Endothelial cell of umbilical vein (primary cell): ENCODE measurements at regions of chr17 and their contacts with region 1.

Region 1: DNA sequence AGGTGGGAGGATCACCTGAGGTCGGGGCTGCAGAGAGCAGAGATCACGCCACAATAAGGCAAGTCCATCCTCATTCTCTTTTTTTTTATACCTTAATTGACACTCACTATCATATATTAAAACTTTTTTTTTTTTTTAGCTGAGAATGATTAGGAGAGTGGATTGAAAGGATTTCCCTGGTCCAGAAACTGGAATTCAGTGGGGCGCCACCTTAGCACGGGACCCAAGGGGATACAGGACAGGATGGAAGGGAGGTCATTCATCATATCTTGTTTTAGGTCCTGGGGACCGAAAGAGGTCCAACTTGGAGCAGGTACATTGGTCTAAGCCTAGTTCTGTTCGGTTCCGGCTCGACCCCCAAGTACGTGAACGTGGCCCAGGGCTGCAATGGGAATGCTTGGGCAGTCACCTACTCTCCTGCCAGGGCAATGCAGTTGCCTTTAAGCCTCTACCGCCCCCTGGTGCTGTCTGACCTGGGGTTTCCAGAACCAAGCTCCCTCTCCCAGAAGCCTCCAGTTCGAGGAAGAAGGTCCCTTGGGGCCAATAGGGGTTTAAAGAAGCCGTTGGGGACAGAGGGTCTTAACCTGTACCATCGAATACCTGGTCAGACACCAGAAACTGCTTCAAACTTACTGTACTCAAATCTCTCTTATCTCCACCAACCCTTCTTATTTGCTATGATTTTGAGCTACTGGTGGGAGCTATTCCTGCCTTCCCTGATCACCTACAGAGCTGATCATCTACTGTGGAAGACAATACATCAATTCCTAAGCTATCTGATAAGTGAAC is 19.9 kb upstream of the GPATCH8 start:
- DNase-seq: peak; percentile 73
- H3K4me3 ChIP-seq: no peak overlapping the region
- H3K27ac ChIP-seq: no peak overlapping the region
- H3K4me1 ChIP-seq: no peaks in the 10 kb centered on the region
- H3K27me3 ChIP-seq: no peaks in the 10 kb centered on the region
- CTCF ChIP-seq: peak; percentile 55 to 81
- POLR2A ChIP-seq: no peak

Region 2: DNA sequence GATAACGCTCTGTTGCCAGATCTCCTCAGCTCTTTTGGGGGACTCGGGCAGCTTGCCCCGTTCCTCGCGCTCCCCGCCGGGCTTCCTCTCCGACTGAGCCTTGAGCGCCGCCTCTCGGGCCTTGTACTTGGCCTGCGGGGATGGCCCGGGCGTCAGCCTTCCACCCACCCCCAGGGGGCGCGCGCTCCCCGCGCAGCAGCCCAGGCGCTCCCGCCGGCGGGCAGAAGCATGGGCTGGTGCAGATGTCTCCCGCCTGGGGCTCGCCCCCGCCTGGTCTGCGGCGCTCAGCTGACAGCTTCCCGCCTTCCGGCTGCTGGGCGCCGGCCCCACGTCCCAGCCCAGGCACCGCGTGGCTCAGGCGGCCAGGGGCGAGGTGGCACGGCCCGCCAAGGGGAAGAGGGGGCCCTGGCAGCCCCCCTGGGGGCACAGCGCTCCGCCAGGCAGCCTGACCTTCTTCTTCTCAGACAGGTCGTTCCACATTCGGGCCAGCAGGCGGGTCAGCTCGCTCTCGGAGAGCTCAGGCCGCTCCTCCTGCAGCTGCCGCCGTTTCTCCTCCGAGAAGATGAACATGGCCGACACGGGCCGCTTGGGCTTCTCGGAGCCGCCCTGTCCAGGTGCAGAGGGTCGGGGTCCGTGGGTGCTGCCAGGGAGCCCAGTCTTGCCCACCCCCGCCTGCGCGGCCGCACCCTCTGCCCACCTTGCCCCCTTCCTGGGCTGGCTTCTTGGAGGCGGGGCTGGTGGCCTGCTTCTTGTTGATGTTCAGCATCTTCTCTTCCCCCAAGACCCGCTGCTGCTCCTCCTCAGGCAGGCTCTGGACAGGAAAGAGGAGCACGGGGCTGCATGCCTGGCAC is 312.5 kb before region 1 on chr17:
- CTCF ChIA-PET with region 1: interaction called, 11 read pairs
- POLR2A ChIA-PET with region 1: no interaction called
- dilution Hi-C with region 1: no loop called
- intact Hi-C with region 1: loop called (anchors 1 kb)
- DNase-seq: peak; percentile 89
- H3K4me3 ChIP-seq: no peak overlapping the region
- H3K27ac ChIP-seq: no peak overlapping the region
- H3K4me1 ChIP-seq: peaks cover 5% of the 10 kb centered on the region
- H3K27me3 ChIP-seq: no peaks in the 10 kb centered on the region
- CTCF ChIP-seq: peak; percentile 99
- POLR2A ChIP-seq: no peak

Region 3: DNA sequence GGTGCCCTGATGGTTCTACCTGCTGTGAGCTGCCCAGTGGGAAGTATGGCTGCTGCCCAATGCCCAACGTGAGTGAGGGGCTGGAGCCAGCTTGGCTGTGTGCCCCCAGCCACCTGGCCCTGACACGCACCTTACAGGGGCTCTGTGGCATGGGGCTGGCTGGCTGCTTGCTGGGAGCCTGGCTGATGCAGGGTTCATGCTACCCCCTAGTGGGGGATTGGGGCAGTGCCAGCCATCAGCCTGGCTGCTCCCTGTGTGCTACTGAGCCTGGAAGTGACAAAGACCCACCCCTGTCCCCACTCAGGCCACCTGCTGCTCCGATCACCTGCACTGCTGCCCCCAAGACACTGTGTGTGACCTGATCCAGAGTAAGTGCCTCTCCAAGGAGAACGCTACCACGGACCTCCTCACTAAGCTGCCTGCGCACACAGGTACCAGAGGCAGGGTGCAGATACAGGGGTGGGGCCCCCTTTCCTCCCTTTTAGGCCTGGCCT is 172.3 kb before region 1 on chr17:
- CTCF ChIA-PET with region 1: interaction called, 15 read pairs
- POLR2A ChIA-PET with region 1: no interaction called
- dilution Hi-C with region 1: no loop called
- intact Hi-C with region 1: no loop called
- DNase-seq: peak; percentile 64
- H3K4me3 ChIP-seq: no peak overlapping the region
- H3K27ac ChIP-seq: no peak overlapping the region
- H3K4me1 ChIP-seq: no peaks in the 10 kb centered on the region
- H3K27me3 ChIP-seq: no peaks in the 10 kb centered on the region
- CTCF ChIP-seq: peak; percentile 64 to 95
- POLR2A ChIP-seq: no peak

Region 4: DNA sequence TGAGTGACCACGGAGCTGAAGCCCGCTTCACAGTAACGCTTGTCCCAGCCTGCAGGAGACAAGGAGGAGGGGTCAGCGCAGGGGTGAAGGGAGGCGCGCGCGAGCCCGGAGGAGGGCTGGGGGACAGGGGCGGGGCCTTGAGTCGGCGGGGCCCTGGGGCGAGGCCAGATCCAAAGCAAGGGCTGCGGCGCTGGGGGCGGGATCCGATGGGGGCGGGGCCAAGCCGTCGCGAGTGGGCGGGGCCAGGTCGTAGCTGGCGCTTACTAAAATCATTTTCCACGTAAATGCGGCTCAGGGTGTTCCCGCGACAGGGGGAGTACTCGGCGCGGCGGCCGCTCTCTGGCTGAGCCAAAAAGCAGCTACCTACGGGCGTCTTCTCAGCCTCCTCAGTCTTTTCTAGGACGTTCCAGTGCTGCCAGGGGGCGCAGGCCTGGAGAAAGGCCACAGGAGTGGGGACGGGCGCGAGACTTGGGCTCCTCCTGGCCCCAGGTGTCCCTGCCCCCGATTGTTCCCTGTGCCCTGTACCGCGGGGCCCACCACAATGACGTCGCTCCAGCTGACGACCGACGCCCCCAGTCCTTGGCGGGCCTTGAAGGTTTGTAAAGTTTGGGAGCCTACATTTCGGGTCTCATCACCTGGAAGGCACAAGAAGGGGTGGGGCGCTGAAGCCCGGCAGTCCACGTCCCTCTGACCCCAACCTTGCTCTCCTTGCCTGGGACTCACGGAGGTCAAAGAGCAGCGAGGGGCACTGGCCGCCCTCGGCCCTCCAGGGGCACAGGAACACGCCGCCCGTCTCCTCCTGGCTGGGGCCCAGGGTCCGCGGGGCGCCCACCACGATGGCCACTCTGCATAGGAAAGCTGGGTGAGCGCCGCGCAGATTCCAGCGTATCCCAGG is 137.5 kb before region 1 on chr17:
- CTCF ChIA-PET with region 1: interaction called, 11 read pairs
- POLR2A ChIA-PET with region 1: no interaction called
- dilution Hi-C with region 1: no loop called
- intact Hi-C with region 1: no loop called
- DNase-seq: peak; percentile 79
- H3K4me3 ChIP-seq: peak overlapping the region in 2 of 3 experiments; percentile 37 to 38
- H3K27ac ChIP-seq: no peak overlapping the region
- H3K4me1 ChIP-seq: peaks cover 8% of the 10 kb centered on the region
- H3K27me3 ChIP-seq: peaks cover 13% of the 10 kb centered on the region in 2 experiments
- CTCF ChIP-seq: peak in 1 of 2 donors; percentile 17
- POLR2A ChIP-seq: no peak

Region 5: GRCh38 chr17:44444735-44445105 is 78.4 kb before region 1 on chr17:
- CTCF ChIA-PET with region 1: interaction called, 18 read pairs
- POLR2A ChIA-PET with region 1: no interaction called
- dilution Hi-C with region 1: no loop called
- intact Hi-C with region 1: no loop called
- DNase-seq: no peak
- H3K4me3 ChIP-seq: no peak overlapping the region
- H3K27ac ChIP-seq: no peak overlapping the region
- H3K4me1 ChIP-seq: no peaks in the 10 kb centered on the region
- H3K27me3 ChIP-seq: no peaks in the 10 kb centered on the region
- CTCF ChIP-seq: no peak
- POLR2A ChIP-seq: no peak

Region 6: DNA sequence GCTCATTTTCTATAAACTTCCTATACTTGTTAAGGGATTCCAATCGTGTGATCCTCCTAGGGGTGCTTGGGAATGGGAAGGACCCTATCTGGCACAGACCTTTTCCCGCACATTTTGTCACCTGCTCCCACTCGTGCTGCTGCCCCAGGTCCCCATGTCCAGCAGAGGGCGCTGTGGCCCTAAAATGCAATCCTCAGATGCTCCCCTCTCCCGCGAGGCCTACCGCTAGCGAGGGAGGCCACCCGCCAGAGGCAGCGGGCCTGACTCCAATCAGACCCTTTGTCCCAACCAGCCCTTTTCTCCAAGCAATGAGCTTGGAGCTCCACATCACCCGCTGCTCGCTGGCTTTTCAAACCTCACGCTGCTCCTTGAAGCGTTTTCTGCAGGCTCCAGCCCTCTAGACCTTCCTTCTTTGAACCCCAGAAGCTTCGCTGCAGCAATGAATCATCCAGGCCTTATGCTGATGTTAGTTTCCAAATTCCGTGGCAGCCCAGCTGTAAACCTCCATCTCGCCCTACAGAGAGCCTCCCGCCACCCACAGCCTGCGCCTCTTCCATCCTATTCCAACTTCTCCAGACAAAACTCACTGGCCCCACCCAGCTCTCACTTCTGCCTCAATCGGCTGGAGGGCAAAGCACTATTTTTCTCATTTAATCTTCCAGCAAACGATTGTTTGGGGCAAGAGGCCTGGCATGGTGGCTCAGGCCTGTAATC is 10.6 kb after region 1 on chr17:
- CTCF ChIA-PET with region 1: interaction called, 37 read pairs
- POLR2A ChIA-PET with region 1: no interaction called
- dilution Hi-C with region 1: no loop called
- intact Hi-C with region 1: no loop called
- DNase-seq: peak; percentile 75
- H3K4me3 ChIP-seq: no peak overlapping the region
- H3K27ac ChIP-seq: no peak overlapping the region
- H3K4me1 ChIP-seq: peaks cover 6% of the 10 kb centered on the region
- H3K27me3 ChIP-seq: peaks cover 5 to 6% of the 10 kb centered on the region in 2 experiments
- CTCF ChIP-seq: peak; percentile 88 to 97
- POLR2A ChIP-seq: no peak

Region 7: GRCh38 chr17:44556832-44557606 is 33.9 kb after region 1 on chr17 and contains the start of gene FZD2:
- CTCF ChIA-PET with region 1: interaction called, 11 read pairs
- POLR2A ChIA-PET with region 1: no interaction called
- dilution Hi-C with region 1: no loop called
- intact Hi-C with region 1: no loop called
- DNase-seq: peak; percentile 92
- H3K4me3 ChIP-seq: peak within 1 kb of the TSS; percentile 44 to 94 (median 87)
- H3K27ac ChIP-seq: peak within 1 kb of the TSS; percentile 30
- H3K4me1 ChIP-seq: peaks cover 7% of the 10 kb centered on the region
- H3K27me3 ChIP-seq: peaks cover 21 to 36% of the 10 kb centered on the region in 2 experiments
- CTCF ChIP-seq: no peak
- POLR2A ChIP-seq: no peak
- total RNA-seq, gene FZD2: 4.4 and 5.8 TPM in 2 replicates